Sciatic nerve (tissue), 2 donors: ENCODE measurements at regions of chr4 and their contacts with region 1.

Region 1: GRCh38 chr4:42570221-42570620 is 86.7 kb downstream of the ATP8A1 start:
- DNase-seq: peak; percentile 63
- ATAC-seq: peak; percentile 61

Region 2: DNA sequence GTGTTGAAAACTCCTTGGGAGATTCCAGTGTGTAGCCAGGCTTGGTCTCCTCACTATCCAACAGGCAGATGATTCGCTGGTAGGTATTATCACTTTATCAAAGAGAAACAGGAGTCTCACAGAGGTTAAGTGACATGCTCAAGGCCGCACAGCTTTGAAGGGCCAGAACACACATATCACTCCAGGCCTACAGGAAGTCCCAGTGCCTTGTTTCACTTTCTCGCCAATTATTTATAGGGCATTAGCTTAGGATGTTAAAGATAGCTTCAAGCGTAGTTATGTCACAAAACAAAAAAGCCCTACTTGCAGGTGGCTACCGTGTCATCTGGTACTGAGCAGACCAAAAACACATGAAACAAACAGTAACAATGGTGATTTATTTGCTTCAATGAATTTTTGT is 73.5 kb after region 1 on chr4:
- intact Hi-C with region 1: no loop called
- DNase-seq: no peak
- ATAC-seq: no peak

Region 3: DNA sequence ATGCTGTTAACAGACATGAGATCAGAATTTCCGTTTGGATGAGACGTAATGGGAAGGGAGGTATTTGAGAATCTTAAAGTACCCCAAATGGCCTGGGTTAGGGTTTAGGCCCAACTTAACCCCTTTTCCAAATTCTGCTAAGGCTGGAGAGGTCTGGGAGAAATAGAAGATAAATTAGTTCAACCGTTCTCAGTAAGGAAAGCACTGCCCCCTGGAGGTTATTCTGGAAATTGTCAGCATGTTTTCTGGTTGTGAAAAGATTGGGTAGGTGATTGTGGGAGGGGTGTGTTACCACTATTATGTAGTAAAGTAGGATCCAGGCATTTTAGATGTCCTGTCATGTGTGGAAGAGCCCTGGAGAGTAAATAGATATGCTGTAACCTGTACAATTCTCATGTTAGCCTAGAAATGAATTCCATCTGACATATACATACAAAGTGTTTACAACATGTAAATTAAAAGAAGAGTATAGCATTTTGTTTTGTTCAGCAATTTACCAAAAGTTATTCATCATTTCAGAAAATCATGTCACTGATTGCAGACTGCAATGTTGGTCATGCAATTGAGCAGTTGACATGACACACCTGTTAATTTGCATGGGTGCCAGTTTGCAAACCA is 295.5 kb after region 1 on chr4:
- intact Hi-C with region 1: loop called (anchors 10 kb)
- DNase-seq: no peak
- ATAC-seq: peak; percentile 20